Sigmoid colon (tissue), 7 donors: ENCODE measurements at regions of chr2 and their contacts with region 1.

Region 1: GRCh38 chr2:218367415-218368153 is 10.9 kb downstream of the CATIP start:
- DNase-seq: peak; percentile 94
- H3K4me3 ChIP-seq: peak overlapping the region; percentile 39 to 55 (median 49)
- H3K27ac ChIP-seq: peak overlapping the region; percentile 77 to 87 (median 82)
- H3K4me1 ChIP-seq: peaks cover 0 to 30% (median 21%) of the 10 kb centered on the region in 4 donors
- H3K27me3 ChIP-seq: no peaks in the 10 kb centered on the region
- CTCF ChIP-seq: no peak
- EP300 ChIP-seq: peak in 1 of 4 donors; percentile 41
- POLR2A ChIP-seq: peak; percentile 81 to 89

Region 2: GRCh38 chr2:217943446-217944389 is 423.9 kb before region 1 on chr2:
- intact Hi-C with region 1: no loop called
- DNase-seq: peak; percentile 96
- H3K4me3 ChIP-seq: peak overlapping the region; percentile 56 to 85 (median 80)
- H3K27ac ChIP-seq: peak overlapping the region; percentile 94 to 98 (median 98)
- H3K4me1 ChIP-seq: peaks cover 0 to 90% (median 60%) of the 10 kb centered on the region in 4 donors
- H3K27me3 ChIP-seq: no peaks in the 10 kb centered on the region
- CTCF ChIP-seq: peak in 2 of 4 experiments; percentile 7 to 25
- EP300 ChIP-seq: no peak
- POLR2A ChIP-seq: peak; percentile 95 to 99

Region 3: GRCh38 chr2:218322895-218323808 is 44.4 kb before region 1 on chr2:
- intact Hi-C with region 1: loop called (anchors 2 kb)
- DNase-seq: peak; percentile 76
- H3K4me3 ChIP-seq: peak overlapping the region; percentile 40 to 94 (median 82)
- H3K27ac ChIP-seq: peak overlapping the region; percentile 71 to 76 (median 75)
- H3K4me1 ChIP-seq: peaks cover 0 to 23% (median 16%) of the 10 kb centered on the region in 4 donors
- H3K27me3 ChIP-seq: no peaks in the 10 kb centered on the region
- CTCF ChIP-seq: no peak
- EP300 ChIP-seq: no peak
- POLR2A ChIP-seq: no peak

Region 4: DNA sequence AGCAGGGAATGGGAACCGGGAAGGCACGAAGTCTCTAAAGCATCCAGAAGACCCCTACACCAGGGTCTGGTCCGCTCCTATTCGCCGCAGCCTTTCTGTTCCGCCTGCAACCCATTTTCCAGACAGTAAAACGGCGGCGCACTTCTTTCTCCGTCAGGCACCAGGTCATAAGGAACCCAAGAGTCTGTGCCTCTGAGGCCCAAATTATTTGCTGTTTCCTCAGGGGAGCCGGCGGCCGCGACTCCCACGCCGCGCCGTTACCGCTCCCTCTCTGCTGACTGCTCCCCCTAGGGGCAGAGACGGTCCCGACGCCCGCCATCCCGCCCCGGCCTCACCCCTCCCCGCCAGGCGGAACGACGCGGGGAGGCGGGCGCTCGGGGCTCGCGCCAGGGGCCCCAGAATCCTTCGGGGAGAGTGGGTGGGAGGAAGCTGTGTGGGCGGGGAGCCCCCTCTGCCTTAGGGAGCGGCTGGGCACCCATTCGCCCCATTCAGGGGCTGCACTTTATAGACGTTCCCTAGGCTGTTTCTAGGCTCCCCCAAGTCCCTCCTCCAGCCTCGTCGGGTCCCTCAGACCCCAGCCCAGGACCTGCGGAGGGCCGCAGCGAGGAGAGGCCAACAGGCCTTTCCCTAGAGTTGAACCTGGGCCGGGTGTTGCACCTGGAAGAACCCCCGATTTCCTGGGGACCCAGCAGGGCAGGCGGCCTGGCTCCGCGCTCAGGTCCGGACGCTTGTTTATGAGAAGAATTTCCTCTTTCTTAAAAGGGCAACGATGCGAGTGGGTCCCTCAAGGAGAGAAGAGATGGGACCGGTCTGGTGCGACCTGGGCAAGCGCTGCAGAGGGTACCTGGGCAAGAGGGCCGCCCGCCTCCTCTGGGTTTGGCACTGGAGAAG is 28.5 kb after region 1 on chr2:
- intact Hi-C with region 1: loop called (anchors 2 kb)
- DNase-seq: peak; percentile 98
- H3K4me3 ChIP-seq: peak overlapping the region; percentile 92 to 100 (median 98)
- H3K27ac ChIP-seq: peak overlapping the region; percentile 97 to 100 (median 100)
- H3K4me1 ChIP-seq: peaks cover 0 to 38% (median 31%) of the 10 kb centered on the region in 4 donors
- H3K27me3 ChIP-seq: no peaks in the 10 kb centered on the region
- CTCF ChIP-seq: peak; percentile 89 to 97 (median 94)
- EP300 ChIP-seq: peak in 2 of 4 donors; percentile 10 to 16
- POLR2A ChIP-seq: peak; percentile 54

Region 5: DNA sequence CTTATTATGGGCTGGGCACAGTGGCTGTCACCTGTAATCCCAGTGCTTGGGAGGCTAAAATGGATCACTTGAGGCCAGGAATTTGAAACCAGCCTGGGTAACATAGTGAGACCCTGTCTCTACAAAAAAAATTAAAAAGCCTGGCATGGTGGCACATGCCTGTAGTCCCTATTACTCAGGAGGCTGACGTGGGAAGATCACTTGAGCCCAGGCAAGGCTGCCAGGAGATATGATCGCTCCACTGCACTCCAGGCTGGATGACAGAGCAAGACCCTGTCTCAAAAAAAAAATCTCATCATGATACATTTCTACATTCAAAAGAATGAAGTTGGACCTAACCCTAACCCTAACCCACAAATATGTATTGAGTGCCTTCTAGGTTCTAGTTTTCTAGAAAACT is 394.2 kb after region 1 on chr2:
- intact Hi-C with region 1: no loop called
- DNase-seq: no peak
- H3K4me3 ChIP-seq: no peak overlapping the region
- H3K27ac ChIP-seq: no peak overlapping the region
- H3K4me1 ChIP-seq: no peaks in the 10 kb centered on the region
- H3K27me3 ChIP-seq: no peaks in the 10 kb centered on the region
- CTCF ChIP-seq: no peak
- EP300 ChIP-seq: no peak
- POLR2A ChIP-seq: no peak